Posterior vena cava (tissue), 2 donors: ENCODE measurements at regions of chr17 and their contacts with region 1.

Region 1: GRCh38 chr17:40177275-40177874 is at the start of gene RAPGEFL1:
- DNase-seq: peak; percentile 93
- total RNA-seq, gene RAPGEFL1: 4.5 to 5.2 TPM

Region 2: GRCh38 chr17:40019140-40019991 is 158.0 kb before region 1 on chr17:
- intact Hi-C with region 1: loop called in 1 of 2 experiments (anchors 10 kb)
- DNase-seq: no peak